ENCODE measurements at regions of chr14 and their contacts with region 1.

Region 1: GRCh38 chr14:75566321-75566720 is 12.1 kb upstream of the FLVCR2 start:
- DNase-seq: peak; percentile 94
- ATAC-seq: peak; percentile 82
- H3K4me3 Mint-ChIP-seq: peak overlapping the region; percentile 72
- H3K27ac Mint-ChIP-seq: peak overlapping the region; percentile 98
- H3K4me1 Mint-ChIP-seq: peaks cover 86% of the 10 kb centered on the region
- H3K27me3 Mint-ChIP-seq: no peaks in the 10 kb centered on the region

Region 2: GRCh38 chr14:75258615-75259466 is 307.5 kb before region 1 on chr14:
- CTCF ChIA-PET with region 1: no interaction called
- POLR2A ChIA-PET with region 1: no interaction called
- intact Hi-C with region 1: loop called in 1 of 2 experiments (anchors 1 kb)
- DNase-seq: peak; percentile 99
- ATAC-seq: peak; percentile 98
- H3K4me3 Mint-ChIP-seq: peak overlapping the region; percentile 77
- H3K27ac Mint-ChIP-seq: peak overlapping the region; percentile 97
- H3K4me1 Mint-ChIP-seq: peaks cover 24% of the 10 kb centered on the region
- H3K27me3 Mint-ChIP-seq: no peaks in the 10 kb centered on the region

Region 3: GRCh38 chr14:75542588-75543091 is 23.7 kb before region 1 on chr14:
- CTCF ChIA-PET with region 1: interaction called, 98 read pairs
- POLR2A ChIA-PET with region 1: interaction called, 22 read pairs
- intact Hi-C with region 1: loop called (anchors 1 kb)
- DNase-seq: peak; percentile 95
- ATAC-seq: peak; percentile 86
- H3K4me3 Mint-ChIP-seq: peak overlapping the region; percentile 59
- H3K27ac Mint-ChIP-seq: peak overlapping the region; percentile 98
- H3K4me1 Mint-ChIP-seq: peaks cover 85% of the 10 kb centered on the region
- H3K27me3 Mint-ChIP-seq: no peaks in the 10 kb centered on the region

Region 4: DNA sequence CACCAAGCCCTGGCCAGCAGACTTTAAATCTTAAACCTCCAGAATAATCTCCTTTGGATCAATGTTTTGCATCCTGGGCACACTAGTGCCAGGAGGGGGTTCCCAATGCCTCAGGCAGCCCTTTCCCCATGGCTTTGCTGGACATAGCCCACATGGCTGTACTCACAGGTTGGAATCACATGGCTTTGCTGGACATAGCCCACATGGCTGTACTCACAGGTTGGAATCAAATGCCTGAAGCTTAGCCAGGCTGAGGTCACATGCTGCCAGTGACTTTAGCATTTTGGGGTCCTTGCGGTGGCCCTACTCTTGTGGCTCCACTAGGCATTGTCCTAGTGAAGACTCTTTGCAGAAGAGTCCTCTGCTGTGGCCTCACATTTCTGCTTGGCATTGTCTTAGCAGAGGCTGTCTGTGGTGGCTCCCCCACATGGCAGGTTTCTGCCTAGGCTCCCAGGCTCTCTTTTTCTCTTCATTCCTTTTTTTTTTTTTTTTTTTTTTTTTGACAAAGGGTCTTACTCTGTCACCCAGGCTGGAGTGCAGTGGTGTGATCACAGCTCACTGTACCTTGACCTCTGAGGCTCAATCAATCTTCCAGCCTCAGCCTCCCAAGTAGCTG is 25.1 kb after region 1 on chr14:
- CTCF ChIA-PET with region 1: no interaction called
- POLR2A ChIA-PET with region 1: no interaction called
- intact Hi-C with region 1: no loop called
- DNase-seq: no peak
- ATAC-seq: no peak
- H3K4me3 Mint-ChIP-seq: no peak overlapping the region
- H3K27ac Mint-ChIP-seq: no peak overlapping the region
- H3K4me1 Mint-ChIP-seq: no peaks in the 10 kb centered on the region
- H3K27me3 Mint-ChIP-seq: no peaks in the 10 kb centered on the region

Region 5: GRCh38 chr14:75654127-75654732 is 87.9 kb after region 1 on chr14:
- CTCF ChIA-PET with region 1: interaction called, 13 read pairs
- POLR2A ChIA-PET with region 1: no interaction called
- intact Hi-C with region 1: no loop called
- DNase-seq: peak; percentile 91
- ATAC-seq: peak; percentile 94
- H3K4me3 Mint-ChIP-seq: no peak overlapping the region
- H3K27ac Mint-ChIP-seq: no peak overlapping the region
- H3K4me1 Mint-ChIP-seq: peaks cover 11% of the 10 kb centered on the region
- H3K27me3 Mint-ChIP-seq: no peaks in the 10 kb centered on the region